Activated T-helper 2 cell treated with anti-CD3 and anti-CD28 coated beads, Interferon-gamma antibody, Interleukin-2, Interleukin-4, amounts not matched to agents 10 μg/mL and 5 μg/mL and 100 μg/mL, durations not matched to agents 14 hours and 24 hours and 36 hours (primary cell): ENCODE measurements at regions of chr4 and their contacts with region 1.

Region 1: GRCh38 chr4:2745981-2746806 is 9.9 kb downstream of the TNIP2 start:
- DNase-seq: peak; percentile 84
- H3K4me3 Mint-ChIP-seq: peak overlapping the region; percentile 63
- H3K27ac Mint-ChIP-seq: peak overlapping the region; percentile 98
- H3K4me1 Mint-ChIP-seq: peaks cover 53% of the 10 kb centered on the region
- H3K27me3 Mint-ChIP-seq: no peaks in the 10 kb centered on the region

Region 2: GRCh38 chr4:2536193-2537010 is 209.8 kb before region 1 on chr4 and contains the start of gene FAM193A:
- intact Hi-C with region 1: loop called (anchors 1 kb)
- DNase-seq: peak; percentile 99
- H3K4me3 Mint-ChIP-seq: peak within 1 kb of the TSS; percentile 90
- H3K27ac Mint-ChIP-seq: peak within 1 kb of the TSS; percentile 93
- H3K4me1 Mint-ChIP-seq: peaks cover 10% of the 10 kb centered on the region
- H3K27me3 Mint-ChIP-seq: no peaks in the 10 kb centered on the region
- total RNA-seq, gene FAM193A: 30.8 and 31.2 TPM in 2 replicates

Region 3: GRCh38 chr4:2798399-2799223 is 52.4 kb after region 1 on chr4:
- intact Hi-C with region 1: loop called (anchors 2 kb)
- DNase-seq: peak; percentile 35
- H3K4me3 Mint-ChIP-seq: peak overlapping the region; percentile 79
- H3K27ac Mint-ChIP-seq: peak overlapping the region; percentile 87
- H3K4me1 Mint-ChIP-seq: peaks cover 51% of the 10 kb centered on the region
- H3K27me3 Mint-ChIP-seq: no peaks in the 10 kb centered on the region

Region 4: DNA sequence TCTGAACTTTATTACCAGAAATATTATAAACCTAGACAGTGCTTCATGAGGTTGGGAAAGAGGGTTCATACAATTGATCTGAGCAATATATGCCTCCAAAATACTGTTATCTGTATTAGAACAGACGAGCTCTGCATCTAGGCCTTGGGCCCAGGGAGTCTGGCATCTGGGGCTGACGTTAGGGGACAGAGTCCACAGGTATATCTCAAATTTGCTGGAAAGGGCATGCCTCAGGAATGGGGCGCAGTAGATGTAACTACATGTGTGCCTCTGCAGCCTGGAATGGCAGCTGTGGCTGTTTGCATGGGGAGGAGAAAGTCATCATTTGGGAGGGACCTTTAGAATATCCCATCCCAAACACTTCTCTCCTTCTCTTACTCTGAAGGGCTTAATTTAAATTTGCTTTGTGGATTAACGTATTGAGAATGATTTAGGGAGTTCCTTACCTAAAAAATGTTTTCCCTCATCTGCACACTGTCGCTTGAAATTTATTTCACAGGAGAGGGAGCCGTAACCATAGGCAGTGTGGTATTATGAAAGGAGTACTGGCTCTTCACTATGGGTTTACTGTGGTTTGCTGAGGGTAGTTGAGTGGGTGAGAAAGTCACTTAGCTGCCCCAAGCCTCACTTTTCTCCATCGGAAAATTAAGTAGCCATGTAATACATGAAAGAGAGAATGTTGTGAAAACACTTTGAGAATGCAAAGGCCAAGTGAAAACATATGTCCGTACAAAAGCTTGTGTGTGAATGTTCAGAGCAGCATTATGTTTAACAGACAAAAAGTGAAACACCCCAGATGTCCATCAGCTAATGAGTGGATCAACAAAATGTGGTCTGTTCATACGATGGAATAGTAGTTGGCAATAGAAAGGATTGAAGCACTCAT is 103.3 kb after region 1 on chr4:
- intact Hi-C with region 1: loop called (anchors 5 kb)
- DNase-seq: no peak
- H3K4me3 Mint-ChIP-seq: no peak overlapping the region
- H3K27ac Mint-ChIP-seq: no peak overlapping the region
- H3K4me1 Mint-ChIP-seq: peaks cover 58% of the 10 kb centered on the region
- H3K27me3 Mint-ChIP-seq: no peaks in the 10 kb centered on the region

Region 5: GRCh38 chr4:2954358-2955185 is 208.4 kb after region 1 on chr4:
- intact Hi-C with region 1: loop called (anchors 1 kb)
- DNase-seq: peak; percentile 57
- H3K4me3 Mint-ChIP-seq: peak overlapping the region; percentile 74
- H3K27ac Mint-ChIP-seq: peak overlapping the region; percentile 92
- H3K4me1 Mint-ChIP-seq: peaks cover 63% of the 10 kb centered on the region
- H3K27me3 Mint-ChIP-seq: no peaks in the 10 kb centered on the region

Region 6: GRCh38 chr4:3047464-3048286 is 301.5 kb after region 1 on chr4:
- intact Hi-C with region 1: loop called (anchors 5 kb)
- DNase-seq: peak; percentile 83
- H3K4me3 Mint-ChIP-seq: peak overlapping the region; percentile 9
- H3K27ac Mint-ChIP-seq: peak overlapping the region; percentile 67
- H3K4me1 Mint-ChIP-seq: peaks cover 27% of the 10 kb centered on the region
- H3K27me3 Mint-ChIP-seq: peaks cover 8% of the 10 kb centered on the region